Posterior cingulate gyrus (tissue), 11 donors: ENCODE measurements at regions of chr14 and their contacts with region 1.

Region 1: GRCh38 chr14:53539489-53540126 is 386.5 kb upstream of the DDHD1 start:
- DNase-seq: peak; percentile 71 to 96 (median 85)

Region 2: GRCh38 chr14:53655080-53655785 is 115.6 kb after region 1 on chr14:
- intact Hi-C with region 1: no loop called
- DNase-seq: no peak

Region 3: DNA sequence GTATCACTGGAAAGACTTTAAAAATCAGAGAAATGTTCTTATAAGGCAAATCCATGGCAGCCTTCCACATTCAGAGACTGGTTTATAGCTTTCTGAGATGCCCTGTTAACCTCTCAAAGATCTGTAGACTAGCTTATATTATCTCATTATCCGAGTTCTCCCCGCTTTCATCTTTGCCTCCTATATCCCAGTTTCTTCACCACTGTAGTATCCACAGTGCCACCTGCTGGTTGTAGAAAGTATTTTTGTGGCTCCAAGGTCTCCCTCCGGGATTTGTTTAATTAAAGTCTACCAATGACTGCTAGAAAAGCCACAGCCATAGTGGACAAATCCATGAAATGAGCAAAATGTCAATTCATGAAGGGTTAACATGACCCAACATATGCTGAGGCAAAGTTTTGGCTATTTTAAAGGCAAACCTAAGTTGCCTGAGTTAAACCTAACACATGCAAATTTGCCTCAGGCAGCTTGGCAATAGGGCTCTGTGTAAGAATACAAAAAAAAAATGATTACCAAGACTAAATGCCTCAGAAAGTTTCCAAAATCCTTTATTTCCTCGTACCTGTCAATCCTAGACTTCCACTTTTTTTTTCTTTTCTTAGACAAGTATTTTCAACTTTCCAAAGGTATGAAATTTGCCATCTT is 635.8 kb after region 1 on chr14:
- intact Hi-C with region 1: loop called (anchors 1 kb)
- DNase-seq: peak in 7 of 10 donors; percentile 24 to 85 (median 66)

Region 4: DNA sequence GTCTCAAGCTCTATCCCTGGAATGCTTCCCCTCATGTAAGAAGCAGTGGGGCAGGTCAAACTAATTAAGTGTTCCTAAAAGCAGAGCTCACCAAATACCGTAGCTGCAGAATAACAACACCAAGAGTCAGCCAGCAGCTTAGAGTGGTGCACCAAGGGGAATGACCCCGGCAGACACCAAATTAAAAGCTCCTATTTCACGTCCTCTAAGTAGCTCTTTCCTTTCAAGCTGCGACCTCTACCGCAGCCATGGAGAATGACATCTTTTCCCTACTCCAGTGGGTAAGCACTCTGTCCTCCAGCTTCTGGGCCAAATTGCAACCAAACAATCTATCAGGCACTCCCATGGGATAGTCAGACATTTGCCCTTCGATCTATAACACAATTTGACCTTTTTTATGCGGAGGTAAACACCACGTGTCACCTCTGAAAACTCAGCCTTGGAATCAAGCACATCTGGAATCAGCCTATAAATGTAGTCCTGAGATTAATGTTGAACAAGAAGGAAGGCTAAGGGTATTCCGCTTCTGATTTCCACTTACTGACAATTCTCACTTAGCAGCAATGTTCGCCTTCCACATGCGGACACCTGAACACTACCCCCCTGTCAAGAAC is 789.6 kb after region 1 on chr14:
- intact Hi-C with region 1: loop called (anchors 1 kb)
- DNase-seq: peak in 4 of 10 donors; percentile 19 to 36 (median 26)

Region 5: DNA sequence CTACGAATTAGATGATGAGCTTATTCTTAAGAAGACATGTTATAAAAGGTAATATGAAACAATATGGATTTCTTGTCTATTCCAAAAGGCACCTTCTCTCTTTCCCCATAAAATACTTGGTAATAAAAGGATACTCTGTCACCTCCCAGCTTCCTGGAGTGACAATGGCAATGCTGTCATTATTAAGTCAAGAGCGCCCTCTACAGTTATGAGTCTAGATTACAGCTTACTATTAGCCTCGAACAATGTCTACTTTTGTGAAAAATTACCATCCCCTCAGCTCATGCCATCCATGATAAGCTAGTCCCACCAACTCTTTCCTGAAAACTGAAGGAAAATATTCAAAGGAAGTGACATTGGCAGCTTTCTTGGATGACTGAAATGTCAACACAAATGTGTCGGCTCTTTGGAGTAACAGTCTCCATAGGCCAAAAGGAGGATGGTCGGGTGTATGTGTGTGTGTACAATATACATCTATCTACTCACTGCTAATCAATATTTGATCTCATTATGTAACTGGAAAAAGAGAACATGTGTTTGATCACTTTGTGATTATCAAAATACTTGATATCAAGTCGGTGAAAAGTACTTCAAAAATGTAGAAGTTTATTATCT is 808.5 kb after region 1 on chr14:
- intact Hi-C with region 1: loop called (anchors 1 kb)
- DNase-seq: no peak